CD4-positive, alpha-beta T cell (primary cell): ENCODE measurements at regions of chr1 and their contacts with region 1.

Region 1: DNA sequence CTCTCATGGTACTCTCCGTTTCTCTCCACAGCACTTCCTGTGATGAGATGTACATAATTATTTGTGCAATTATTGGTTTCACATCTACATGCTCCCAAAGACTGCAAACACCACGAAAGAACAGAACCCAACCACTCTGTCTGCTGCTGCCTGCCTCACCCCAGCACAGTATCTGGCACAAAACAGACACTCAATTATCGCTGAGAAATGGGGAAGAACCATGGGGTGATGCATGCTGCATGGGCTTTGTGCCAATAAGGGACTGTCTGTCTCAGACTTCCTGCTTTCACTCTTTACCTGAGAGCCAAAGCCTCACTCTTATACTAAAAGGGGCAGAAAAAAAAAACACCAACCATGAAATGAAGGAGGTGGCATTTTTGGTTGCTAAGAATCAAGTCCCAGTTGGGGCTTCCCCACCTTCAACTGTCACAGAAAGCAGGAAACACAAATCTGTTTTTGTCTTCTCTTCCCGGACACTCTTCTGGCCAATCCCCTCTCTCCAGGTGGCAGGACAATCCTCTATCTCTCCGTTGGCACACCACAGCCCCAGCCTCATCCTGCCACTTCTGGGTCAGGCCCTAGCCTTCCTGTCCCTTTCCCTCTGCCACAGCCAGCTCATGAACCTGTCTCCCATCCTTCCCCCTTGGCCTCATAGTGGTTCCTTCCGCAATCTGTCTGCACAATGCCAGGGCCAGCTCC is 82.0 kb downstream of the TGFBR3 start:
- DNase-seq: peak; percentile 49 to 94 (median 68)
- ATAC-seq: peak; percentile 54
- H3K4me3 ChIP-seq: peak overlapping the region; percentile 40
- H3K4me3 Mint-ChIP-seq: peak overlapping the region; percentile 58
- H3K27ac ChIP-seq: peak overlapping the region; percentile 97 to 99
- H3K27ac Mint-ChIP-seq: peak overlapping the region; percentile 94
- H3K4me1 ChIP-seq: peaks cover 43% of the 10 kb centered on the region
- H3K4me1 Mint-ChIP-seq: peaks cover 40% of the 10 kb centered on the region
- H3K27me3 ChIP-seq: no peaks in the 10 kb centered on the region
- H3K27me3 Mint-ChIP-seq: no peaks in the 10 kb centered on the region
- CTCF ChIP-seq: no peak

Region 2: GRCh38 chr1:91555821-91556531 is 248.0 kb before region 1 on chr1:
- CTCF ChIA-PET with region 1: no interaction called
- POLR2A ChIA-PET with region 1: interaction called, 4 read pairs
- intact Hi-C with region 1: loop called in 1 of 2 experiments (anchors 2 kb)
- DNase-seq: peak in 13 of 14 experiments; percentile 29 to 92 (median 46)
- ATAC-seq: peak; percentile 87
- H3K4me3 ChIP-seq: no peak overlapping the region
- H3K4me3 Mint-ChIP-seq: peak overlapping the region; percentile 2
- H3K27ac ChIP-seq: peak overlapping the region; percentile 33 to 83
- H3K27ac Mint-ChIP-seq: peak overlapping the region; percentile 90
- H3K4me1 ChIP-seq: peaks cover 66% of the 10 kb centered on the region
- H3K4me1 Mint-ChIP-seq: peaks cover 86% of the 10 kb centered on the region
- H3K27me3 ChIP-seq: no peaks in the 10 kb centered on the region
- H3K27me3 Mint-ChIP-seq: no peaks in the 10 kb centered on the region
- CTCF ChIP-seq: no peak

Region 3: GRCh38 chr1:91885716-91886506 is 81.9 kb after region 1 on chr1 and contains the start of gene TGFBR3:
- CTCF ChIA-PET with region 1: interaction called, 8 read pairs
- POLR2A ChIA-PET with region 1: interaction called, 21 read pairs
- intact Hi-C with region 1: loop called (anchors 2 to 5 kb)
- DNase-seq: peak; percentile 44 to 87 (median 74)
- ATAC-seq: peak; percentile 71
- H3K4me3 ChIP-seq: peak within 1 kb of the TSS; percentile 72
- H3K4me3 Mint-ChIP-seq: peak within 1 kb of the TSS; percentile 96
- H3K27ac ChIP-seq: peak within 1 kb of the TSS in 1 of 2 donors; percentile 21
- H3K27ac Mint-ChIP-seq: peak within 1 kb of the TSS; percentile 77
- H3K4me1 ChIP-seq: peaks cover 30% of the 10 kb centered on the region
- H3K4me1 Mint-ChIP-seq: peaks cover 35% of the 10 kb centered on the region
- H3K27me3 ChIP-seq: no peaks in the 10 kb centered on the region
- H3K27me3 Mint-ChIP-seq: no peaks in the 10 kb centered on the region
- CTCF ChIP-seq: peak; percentile 35
- total RNA-seq, gene TGFBR3: 31.5 to 36.6 TPM

Region 4: DNA sequence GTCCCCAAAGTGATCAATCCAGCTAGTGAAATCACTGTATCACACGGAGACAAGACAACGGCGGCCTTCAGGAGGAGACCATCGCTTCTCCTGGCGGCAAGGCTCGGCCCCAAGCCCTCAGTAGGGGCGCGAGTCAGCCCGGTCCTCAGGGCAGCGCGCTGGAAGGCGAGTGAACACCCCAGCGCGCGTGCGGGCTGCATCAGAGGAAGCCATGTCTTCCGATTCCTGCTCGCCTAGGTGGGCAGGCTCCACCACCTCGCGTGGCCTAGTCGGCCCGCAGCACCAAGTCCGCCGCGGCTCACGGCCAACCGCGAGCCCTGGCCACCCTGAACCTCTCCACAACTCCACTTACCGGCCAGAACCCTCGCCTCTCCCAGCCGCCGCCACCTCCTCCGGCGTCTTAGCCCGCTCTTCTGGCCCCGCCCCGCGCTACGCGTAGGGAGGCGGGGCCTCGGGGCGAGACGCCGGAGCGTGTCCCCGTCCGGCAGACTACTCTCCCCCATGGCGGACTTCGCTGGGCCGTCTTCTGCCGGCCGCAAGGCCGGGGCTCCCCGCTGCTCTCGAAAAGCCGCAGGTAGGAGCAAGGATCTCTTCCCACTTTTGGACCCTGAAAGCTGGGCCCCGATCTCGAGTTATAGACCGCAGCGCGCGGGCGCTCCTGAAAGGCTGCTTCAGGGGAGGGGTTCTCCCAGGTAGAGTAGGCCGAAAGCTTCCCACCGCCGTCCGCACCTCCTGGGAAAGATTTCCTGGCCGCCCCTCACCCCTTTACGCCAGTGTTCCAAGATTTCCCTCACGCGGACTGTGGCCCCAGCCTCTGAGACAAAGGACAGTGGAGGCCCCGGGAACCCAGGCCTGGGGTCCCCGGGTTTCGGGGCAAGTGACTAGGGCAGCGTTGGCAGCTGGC is 494.8 kb after region 1 on chr1 and contains the starts of genes GLMN and RPAP2:
- CTCF ChIA-PET with region 1: no interaction called
- POLR2A ChIA-PET with region 1: no interaction called
- intact Hi-C with region 1: loop called in 1 of 2 experiments (anchors 10 kb)
- DNase-seq: peak; percentile 40 to 89 (median 60)
- ATAC-seq: peak; percentile 96
- H3K4me3 ChIP-seq: peak within 1 kb of the TSS; percentile 98
- H3K4me3 Mint-ChIP-seq: peak within 1 kb of the TSS; percentile 100
- H3K27ac ChIP-seq: peak within 1 kb of the TSS; percentile 86 to 93
- H3K27ac Mint-ChIP-seq: peak within 1 kb of the TSS; percentile 96
- H3K4me1 ChIP-seq: peaks cover 12% of the 10 kb centered on the region
- H3K4me1 Mint-ChIP-seq: peaks cover 54% of the 10 kb centered on the region
- H3K27me3 ChIP-seq: no peaks in the 10 kb centered on the region
- H3K27me3 Mint-ChIP-seq: no peaks in the 10 kb centered on the region
- CTCF ChIP-seq: no peak
- total RNA-seq, gene GLMN: 7.7 to 11.7 TPM
- total RNA-seq, gene RPAP2: 23.4 to 26.5 TPM